KBM-7 (cell line): ENCODE measurements at regions of chr7 and their contacts with region 1.

Region 1: DNA sequence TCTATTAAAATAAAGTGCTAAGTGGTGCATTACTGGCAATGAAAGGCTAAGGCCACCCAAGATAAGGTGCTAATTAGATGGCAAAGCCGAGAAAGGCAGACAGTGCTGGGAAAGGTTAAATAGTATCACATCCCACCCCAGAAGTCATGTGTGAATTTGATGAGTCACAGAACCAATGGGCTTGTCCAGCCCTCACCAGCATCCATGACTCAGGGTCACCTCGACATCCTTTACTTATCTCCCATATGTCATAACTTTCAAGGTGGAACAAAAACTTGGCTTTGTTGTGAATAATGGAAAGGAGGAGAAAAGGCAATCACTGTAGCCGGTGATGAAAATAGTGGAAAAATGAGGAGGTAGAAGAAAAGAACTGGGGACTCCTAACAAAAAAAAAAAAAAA is 459.1 kb downstream of the PLXNA4 start:
- DNase-seq: no peak

Region 2: DNA sequence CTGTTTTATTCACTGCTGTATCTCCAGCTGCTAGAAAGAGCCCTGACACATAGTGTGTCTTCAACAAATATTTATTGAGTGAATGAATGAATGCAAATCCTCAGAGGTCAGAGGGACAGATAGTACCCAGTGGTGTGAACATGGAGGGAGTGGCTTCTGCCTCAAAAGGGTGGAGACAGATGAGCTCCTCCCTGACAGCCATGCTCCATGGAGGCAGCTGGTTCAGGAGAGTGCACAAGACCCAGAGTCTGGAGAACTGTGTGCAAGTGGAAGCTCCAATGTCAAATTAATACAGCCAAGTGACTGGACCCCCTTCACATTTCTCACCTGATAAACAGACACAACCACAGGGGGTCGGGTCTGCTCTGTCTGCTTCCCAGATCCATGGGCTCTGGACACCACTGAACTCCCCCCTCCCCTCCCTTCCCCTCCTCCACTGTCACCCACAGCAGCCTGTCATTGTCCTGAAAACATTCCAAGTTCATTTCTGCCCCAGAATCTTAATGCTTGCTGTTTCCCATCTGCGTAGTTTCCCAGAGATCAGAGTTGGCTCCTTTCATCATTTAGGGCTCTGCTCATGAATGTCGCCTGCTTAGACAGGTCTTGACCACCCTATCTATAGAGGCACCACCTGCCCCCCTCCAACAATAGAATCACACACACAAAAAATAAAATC is 247.9 kb before region 1 on chr7:
- in situ Hi-C with region 1: no loop called
- DNase-seq: no peak

Region 3: DNA sequence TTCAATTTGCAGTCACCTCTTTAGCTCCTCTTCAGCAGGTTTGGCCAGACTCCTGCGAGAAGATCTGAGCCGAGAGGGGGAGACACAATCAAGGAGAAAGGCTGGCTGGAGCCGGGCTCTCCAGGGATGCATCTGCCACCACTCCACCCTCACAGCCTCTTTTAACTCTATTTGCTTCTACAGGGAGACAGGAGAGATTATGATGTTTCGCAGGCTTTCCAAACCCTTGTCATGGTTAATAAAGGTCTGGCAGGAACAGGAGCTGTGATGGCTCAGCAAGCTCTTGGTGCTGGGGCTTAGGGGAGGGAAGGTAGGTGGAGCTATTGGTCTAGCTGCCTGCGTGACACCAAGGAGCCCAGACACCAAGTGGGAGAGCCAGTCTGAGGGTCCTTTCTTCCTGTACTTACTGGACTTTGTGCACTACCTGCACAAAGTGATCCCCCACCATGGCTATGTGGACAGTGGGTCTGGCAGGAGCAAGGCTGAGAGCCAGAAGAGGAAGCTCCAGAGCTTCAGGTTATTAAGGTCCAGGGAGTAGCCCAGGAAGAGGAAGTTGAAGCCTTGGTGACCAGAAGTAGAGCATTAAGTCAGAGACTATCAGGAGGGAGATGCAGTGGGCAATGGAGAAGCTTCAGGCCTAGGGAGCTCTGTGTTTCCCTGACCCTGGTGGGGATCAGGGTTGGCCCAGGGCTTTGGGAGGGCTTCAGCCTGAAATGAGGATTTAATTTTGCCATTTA is 112.5 kb before region 1 on chr7:
- in situ Hi-C with region 1: loop called (anchors 25 kb)
- DNase-seq: no peak